HepG2 (cell line): ENCODE measurements at regions of chr4 and their contacts with region 1.

Region 1: DNA sequence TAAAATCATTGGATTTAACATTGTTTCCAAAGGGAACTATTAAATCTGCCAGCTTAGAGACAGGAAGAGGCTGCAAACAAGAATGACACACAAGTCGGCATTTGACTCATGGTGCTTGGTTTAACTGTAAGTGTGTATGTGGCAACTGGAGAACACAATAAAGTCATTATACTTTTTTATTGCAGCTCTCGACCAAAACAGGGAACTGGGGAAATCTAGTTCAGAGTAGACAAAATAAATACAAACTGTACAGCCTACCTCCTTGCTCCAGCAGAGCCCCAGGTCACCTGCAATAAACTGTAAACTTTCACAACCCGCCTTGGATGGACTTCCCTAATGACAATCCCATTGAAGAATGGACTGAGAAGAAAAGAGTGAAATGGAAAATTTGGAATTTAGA is 24.0 kb downstream of the NPY5R start:
- DNase-seq: no peak
- ATAC-seq: no peak
- H3K4me3 ChIP-seq: no peak overlapping the region
- H3K27ac ChIP-seq: no peak overlapping the region
- H3K4me1 ChIP-seq: no peaks in the 10 kb centered on the region
- H3K27me3 ChIP-seq: no peaks in the 10 kb centered on the region
- CTCF ChIP-seq: no peak
- EP300 ChIP-seq: no peak
- POLR2A ChIP-seq: no peak
- RAD21 ChIP-seq: no peak

Region 2: GRCh38 chr4:163309466-163309865 is 58.2 kb before region 1 on chr4:
- CTCF ChIA-PET with region 1: no interaction called
- POLR2A ChIA-PET with region 1: no interaction called
- in situ Hi-C with region 1: loop called (anchors 5 kb)
- intact Hi-C with region 1: no loop called
- DNase-seq: no peak
- ATAC-seq: no peak
- H3K4me3 ChIP-seq: no peak overlapping the region
- H3K27ac ChIP-seq: no peak overlapping the region
- H3K4me1 ChIP-seq: no peaks in the 10 kb centered on the region
- H3K27me3 ChIP-seq: no peaks in the 10 kb centered on the region
- CTCF ChIP-seq: no peak
- EP300 ChIP-seq: no peak
- POLR2A ChIP-seq: no peak
- RAD21 ChIP-seq: no peak

Region 3: DNA sequence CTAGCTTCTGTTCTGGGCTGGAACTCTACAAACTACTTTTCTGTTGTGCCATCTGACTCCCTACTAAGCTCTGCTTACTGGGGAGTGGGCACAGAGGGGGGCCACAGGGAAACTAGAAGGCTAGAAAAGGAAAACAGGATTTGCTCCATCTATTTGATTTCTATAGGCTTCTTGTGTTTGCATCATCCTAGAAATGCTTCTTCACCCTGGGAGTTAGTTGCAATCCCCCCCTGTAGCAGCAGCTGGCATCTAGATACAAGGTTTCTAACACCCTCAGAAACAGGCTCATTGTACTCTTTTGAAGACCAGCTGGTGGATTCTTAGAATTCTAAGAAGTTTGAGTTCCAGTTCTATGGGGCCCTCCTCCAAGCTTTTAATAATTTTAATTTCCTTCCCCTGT is 340.2 kb after region 1 on chr4:
- CTCF ChIA-PET with region 1: no interaction called
- POLR2A ChIA-PET with region 1: no interaction called
- in situ Hi-C with region 1: no loop called
- intact Hi-C with region 1: no loop called
- DNase-seq: no peak
- ATAC-seq: no peak
- H3K4me3 ChIP-seq: no peak overlapping the region
- H3K27ac ChIP-seq: no peak overlapping the region
- H3K4me1 ChIP-seq: no peaks in the 10 kb centered on the region
- H3K27me3 ChIP-seq: no peaks in the 10 kb centered on the region
- CTCF ChIP-seq: no peak
- EP300 ChIP-seq: no peak
- POLR2A ChIP-seq: no peak
- RAD21 ChIP-seq: no peak